K562 (cell line): ENCODE measurements at regions of chr5 and their contacts with region 1.

Region 1: DNA sequence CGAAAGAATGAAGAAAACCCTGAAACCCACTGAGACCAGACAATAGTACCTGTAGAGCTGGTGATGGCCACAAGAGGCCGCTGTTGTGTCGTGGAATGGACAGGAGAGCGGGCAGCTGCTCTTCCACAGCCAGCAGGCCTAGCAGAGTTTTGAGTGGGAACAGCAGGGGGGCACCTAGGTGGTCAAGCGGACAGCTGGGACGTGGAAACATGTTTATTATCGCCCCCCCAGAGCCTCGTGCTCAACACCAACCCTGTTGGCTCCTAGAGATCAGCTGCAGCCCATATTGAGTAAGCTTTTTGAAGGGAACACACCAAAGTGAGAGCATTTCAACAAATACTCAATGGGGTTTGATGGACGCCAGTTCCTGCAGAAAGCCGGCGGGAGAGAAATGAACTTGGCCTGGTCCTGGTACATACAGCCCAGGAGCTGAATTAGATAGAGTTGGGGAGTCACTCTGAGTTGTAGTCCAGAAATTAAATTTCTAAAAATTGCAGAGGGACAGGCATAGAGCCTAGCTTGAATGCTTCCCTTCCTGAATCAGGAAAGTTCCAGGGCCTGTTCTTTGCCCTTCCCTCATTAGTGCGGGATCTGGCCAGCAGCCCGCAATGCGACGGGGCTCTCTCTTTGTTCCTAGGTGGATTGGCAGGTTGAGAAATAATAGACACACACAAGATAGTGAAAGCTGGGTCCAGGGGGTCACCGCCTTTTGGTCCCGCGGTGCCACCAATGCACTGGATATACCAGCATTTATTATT is 33.8 kb downstream of the MFAP3 start:
- DNase-seq: peak; percentile 83 to 86 (median 84)
- ATAC-seq: peak; percentile 98
- H3K4me3 ChIP-seq: no peak overlapping the region
- H3K27ac ChIP-seq: no peak overlapping the region
- H3K4me1 ChIP-seq: no peaks in the 10 kb centered on the region; a peak in 1 of 5 replicates
- H3K27me3 ChIP-seq: no peaks in the 10 kb centered on the region; a peak in 1 of 5 replicates
- CTCF ChIP-seq: peak; percentile 93 to 97 (median 96)
- EP300 ChIP-seq: no peak
- POLR2A ChIP-seq: no peak
- RAD21 ChIP-seq: peak; percentile 96 to 97

Region 2: DNA sequence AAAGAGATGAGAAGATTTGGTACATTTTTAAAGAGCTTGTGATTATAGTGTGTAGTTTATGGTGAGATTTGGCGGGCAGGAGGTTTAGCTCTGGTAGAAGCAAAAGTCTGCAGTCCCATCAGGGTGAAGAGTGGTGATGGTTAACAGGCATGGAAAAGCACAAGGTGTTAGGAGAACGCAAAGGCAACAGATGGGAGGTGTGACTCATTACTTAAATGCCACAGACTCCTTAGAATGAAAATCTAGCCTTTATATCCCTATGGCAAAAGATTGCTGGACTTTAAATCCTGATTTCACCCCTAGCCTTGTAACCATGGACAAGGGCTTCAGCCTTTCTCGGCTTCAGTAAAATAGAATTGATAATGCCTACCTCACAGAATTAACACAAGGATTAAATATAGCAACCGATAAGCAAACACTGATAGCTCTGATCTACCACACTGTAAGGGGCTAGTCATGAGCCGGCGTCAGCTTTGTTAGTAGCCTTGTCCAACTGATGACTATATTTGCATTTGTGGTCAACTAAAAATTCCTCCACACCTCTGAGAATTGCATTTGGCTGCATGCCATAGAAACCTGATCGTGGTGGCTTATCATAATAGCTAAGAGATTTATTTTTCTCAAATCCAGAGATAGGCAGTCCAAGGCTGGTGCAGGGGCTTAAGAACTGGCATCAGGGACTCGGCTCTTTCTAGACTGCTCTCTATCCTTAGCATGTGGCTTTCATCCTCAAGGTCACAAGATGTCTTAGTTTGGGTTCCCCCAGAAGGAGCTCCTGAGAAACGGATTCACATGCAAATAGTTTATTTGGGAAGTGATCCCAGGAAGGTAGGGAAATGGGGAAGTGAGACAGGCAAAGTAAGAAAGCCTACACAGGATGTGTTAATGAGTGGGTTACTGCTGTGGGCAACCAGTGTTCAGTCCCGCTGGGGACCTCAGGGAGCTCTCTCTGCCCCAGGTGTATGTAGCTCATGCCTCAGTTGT is 14.2 kb before region 1 on chr5:
- CTCF ChIA-PET with region 1: interaction called, 3 read pairs
- POLR2A ChIA-PET with region 1: interaction called, 11 read pairs
- in situ Hi-C with region 1: no loop called
- intact Hi-C with region 1: no loop called
- DNase-seq: peak in 1 of 4 experiments; percentile 18
- ATAC-seq: no peak; the same call in 2 of the 3 replicates
- H3K4me3 ChIP-seq: no peak overlapping the region
- H3K27ac ChIP-seq: no peak overlapping the region
- H3K4me1 ChIP-seq: peaks cover 0 to 3% of the 10 kb centered on the region in 2 experiments; a peak in 1 of 5 replicates
- H3K27me3 ChIP-seq: no peaks in the 10 kb centered on the region
- CTCF ChIP-seq: no peak
- EP300 ChIP-seq: no peak
- POLR2A ChIP-seq: no peak
- RAD21 ChIP-seq: no peak

Region 3: DNA sequence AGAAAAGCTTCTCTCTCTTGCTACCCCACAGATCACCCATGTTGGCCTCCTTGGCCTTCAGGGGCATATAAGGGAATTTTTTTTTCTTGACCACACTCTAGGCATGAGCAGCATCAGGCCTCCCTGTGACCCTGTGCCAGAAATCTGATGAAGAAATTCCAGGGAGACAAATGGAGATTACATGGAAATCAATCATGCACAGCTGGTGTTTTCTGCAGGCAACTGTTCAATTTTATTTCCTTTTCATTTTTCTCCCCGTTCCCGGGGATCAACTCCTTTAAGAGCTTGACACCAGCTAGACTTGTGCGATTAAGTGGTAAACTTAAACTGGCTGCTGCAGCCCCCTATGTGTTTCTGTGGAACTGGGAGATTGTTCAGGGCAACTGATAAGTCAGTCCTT is 177.2 kb after region 1 on chr5:
- CTCF ChIA-PET with region 1: no interaction called
- POLR2A ChIA-PET with region 1: no interaction called
- in situ Hi-C with region 1: no loop called
- intact Hi-C with region 1: no loop called
- DNase-seq: no peak
- ATAC-seq: no peak
- H3K4me3 ChIP-seq: no peak overlapping the region
- H3K27ac ChIP-seq: no peak overlapping the region
- H3K4me1 ChIP-seq: no peaks in the 10 kb centered on the region
- H3K27me3 ChIP-seq: no peaks in the 10 kb centered on the region
- CTCF ChIP-seq: no peak
- EP300 ChIP-seq: no peak
- POLR2A ChIP-seq: no peak
- RAD21 ChIP-seq: no peak

Region 4: DNA sequence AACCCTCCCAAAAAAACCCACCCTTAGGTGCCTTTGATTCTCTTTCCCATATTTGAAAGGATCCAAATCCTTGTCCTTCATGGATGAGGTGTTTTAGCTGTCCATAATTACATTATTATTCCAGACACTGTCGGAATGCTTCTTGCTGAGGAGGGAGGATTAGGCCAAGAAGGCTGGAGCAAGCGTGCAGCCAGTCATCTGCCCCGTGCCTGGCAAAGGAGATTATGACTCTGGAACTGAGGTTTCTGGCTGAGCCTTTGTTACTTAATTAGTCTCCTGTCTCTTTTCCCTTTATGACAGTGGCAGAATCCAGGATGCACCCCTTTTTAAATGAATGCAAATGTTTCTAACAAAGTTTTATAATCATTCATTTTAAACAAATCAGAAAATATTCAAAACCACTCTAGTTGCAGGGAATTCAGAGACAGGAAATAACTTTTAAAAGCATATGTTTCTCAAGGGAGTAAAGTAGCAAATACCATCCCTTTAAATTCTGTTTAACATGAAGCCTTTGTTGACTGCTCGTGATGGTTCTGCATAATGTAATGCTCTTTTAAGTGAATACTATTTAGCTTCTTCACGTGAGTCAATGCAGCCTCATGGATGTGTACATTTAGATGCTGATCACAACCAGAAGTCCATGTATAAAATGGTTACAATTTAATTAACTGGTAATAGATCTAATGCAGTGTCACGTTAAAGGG is 187.8 kb after region 1 on chr5:
- CTCF ChIA-PET with region 1: no interaction called
- POLR2A ChIA-PET with region 1: no interaction called
- in situ Hi-C with region 1: no loop called
- intact Hi-C with region 1: no loop called
- DNase-seq: no peak
- ATAC-seq: no peak
- H3K4me3 ChIP-seq: no peak overlapping the region
- H3K27ac ChIP-seq: no peak overlapping the region
- H3K4me1 ChIP-seq: no peaks in the 10 kb centered on the region
- H3K27me3 ChIP-seq: no peaks in the 10 kb centered on the region
- CTCF ChIP-seq: no peak
- EP300 ChIP-seq: no peak
- POLR2A ChIP-seq: no peak
- RAD21 ChIP-seq: no peak

Region 5: DNA sequence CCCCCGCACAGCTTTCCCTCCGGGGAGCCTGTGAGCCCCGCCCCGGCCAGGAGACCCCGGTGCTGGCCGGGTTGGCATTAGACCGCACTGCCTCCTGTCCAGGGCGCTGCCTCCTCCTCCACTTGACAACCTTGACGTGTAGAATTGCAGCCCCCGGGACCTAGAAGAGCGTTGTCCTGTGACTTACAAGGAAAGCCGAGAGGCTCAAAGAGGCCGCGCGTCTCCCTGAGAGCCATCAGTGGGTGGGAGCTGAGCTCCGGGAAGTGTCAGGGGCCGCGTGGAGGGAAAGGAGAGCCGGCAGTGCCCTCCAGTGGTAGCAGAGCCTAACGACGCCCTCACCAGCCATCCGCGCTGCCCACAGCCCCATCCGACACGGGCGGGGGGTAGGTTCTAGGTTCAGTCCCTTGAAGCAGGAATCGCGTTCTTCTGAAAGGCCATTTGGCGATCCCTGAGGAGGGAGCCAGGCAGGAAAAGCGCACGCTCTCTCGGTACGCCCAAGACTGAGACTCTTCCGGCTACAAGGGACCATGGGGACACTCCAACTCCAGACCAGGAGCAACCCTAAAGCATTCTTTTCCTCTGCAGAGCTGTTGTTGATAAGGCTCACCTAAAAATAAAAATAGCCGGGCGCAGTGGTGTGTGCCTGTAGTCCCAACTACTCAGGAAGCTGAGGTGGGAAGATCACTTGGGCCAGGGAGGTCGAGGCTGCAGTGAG is 332.6 kb after region 1 on chr5:
- CTCF ChIA-PET with region 1: interaction called, 13 read pairs
- POLR2A ChIA-PET with region 1: no interaction called
- in situ Hi-C with region 1: loop called (anchors 5 kb)
- intact Hi-C with region 1: loop called (anchors 1 kb)
- DNase-seq: peak; percentile 82 to 87 (median 86)
- ATAC-seq: peak; percentile 99
- H3K4me3 ChIP-seq: no peak overlapping the region
- H3K27ac ChIP-seq: no peak overlapping the region
- H3K4me1 ChIP-seq: peaks cover 0 to 9% of the 10 kb centered on the region in 2 experiments; a peak in 3 of 5 replicates
- H3K27me3 ChIP-seq: no peaks in the 10 kb centered on the region
- CTCF ChIP-seq: peak; percentile 84 to 93 (median 91)
- EP300 ChIP-seq: no peak
- POLR2A ChIP-seq: no peak
- RAD21 ChIP-seq: peak; percentile 91 to 94

Region 6: GRCh38 chr5:154467655-154468354 is 395.2 kb after region 1 on chr5:
- CTCF ChIA-PET with region 1: interaction called, 3 read pairs
- POLR2A ChIA-PET with region 1: no interaction called
- in situ Hi-C with region 1: no loop called
- intact Hi-C with region 1: loop called (anchors 5 kb)
- DNase-seq: peak; percentile 80 to 88 (median 87)
- ATAC-seq: peak; percentile 99
- H3K4me3 ChIP-seq: no peak overlapping the region
- H3K27ac ChIP-seq: no peak overlapping the region
- H3K4me1 ChIP-seq: no peaks in the 10 kb centered on the region
- H3K27me3 ChIP-seq: peaks cover 17% of the 10 kb centered on the region in 2 experiments
- CTCF ChIP-seq: peak; percentile 88 to 91 (median 89)
- EP300 ChIP-seq: no peak
- POLR2A ChIP-seq: no peak
- RAD21 ChIP-seq: peak; percentile 79 to 88

Region 7: GRCh38 chr5:154603978-154604679 is 531.5 kb after region 1 on chr5:
- CTCF ChIA-PET with region 1: interaction called, 3 read pairs
- POLR2A ChIA-PET with region 1: no interaction called
- in situ Hi-C with region 1: loop called (anchors 10 kb)
- intact Hi-C with region 1: no loop called
- DNase-seq: no peak
- ATAC-seq: peak; percentile 37
- H3K4me3 ChIP-seq: no peak overlapping the region
- H3K27ac ChIP-seq: no peak overlapping the region
- H3K4me1 ChIP-seq: peaks cover 0 to 4% of the 10 kb centered on the region in 2 experiments; a peak in 1 of 5 replicates
- H3K27me3 ChIP-seq: peaks cover 14 to 38% of the 10 kb centered on the region in 2 experiments; a peak in 4 of 5 replicates
- CTCF ChIP-seq: no peak
- EP300 ChIP-seq: no peak
- POLR2A ChIP-seq: no peak
- RAD21 ChIP-seq: no peak